ENCODE measurements at regions of chr1 and their contacts with region 1.

Region 1: GRCh38 chr1:170967042-170967910 is 31.9 kb downstream of the MROH9 start:
- DNase-seq: peak in 3 of 7 donors; percentile 12 to 23 (median 18)
- H3K4me3 ChIP-seq: no peak overlapping the region
- H3K27ac ChIP-seq: no peak overlapping the region
- H3K4me1 ChIP-seq: no peaks in the 10 kb centered on the region
- H3K27me3 ChIP-seq: no peaks in the 10 kb centered on the region
- CTCF ChIP-seq: peak; percentile 56 to 73 (median 68)
- POLR2A ChIP-seq: no peak

Region 2: DNA sequence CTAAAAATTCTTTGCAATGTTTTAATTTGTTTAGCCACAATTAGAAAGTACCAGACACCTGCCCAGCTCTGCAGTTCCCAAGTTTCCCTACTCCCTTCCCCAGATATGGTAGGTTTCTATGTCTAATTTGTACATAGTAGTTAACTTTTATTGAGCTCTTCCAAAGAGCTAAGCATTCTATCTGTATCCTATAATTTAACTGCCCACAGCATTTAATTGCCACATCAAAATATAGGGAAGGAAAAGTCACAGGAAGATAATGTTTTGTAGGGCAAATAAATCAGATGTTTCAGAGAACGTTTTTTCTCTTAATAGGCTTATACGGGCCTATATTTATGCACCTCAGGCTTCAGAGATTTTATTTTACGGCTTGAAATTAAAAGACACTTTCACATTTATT is 107.8 kb after region 1 on chr1:
- intact Hi-C with region 1: no loop called
- DNase-seq: no peak
- H3K4me3 ChIP-seq: no peak overlapping the region
- H3K27ac ChIP-seq: no peak overlapping the region
- H3K4me1 ChIP-seq: no peaks in the 10 kb centered on the region
- H3K27me3 ChIP-seq: no peaks in the 10 kb centered on the region
- CTCF ChIP-seq: no peak
- POLR2A ChIP-seq: no peak

Region 3: DNA sequence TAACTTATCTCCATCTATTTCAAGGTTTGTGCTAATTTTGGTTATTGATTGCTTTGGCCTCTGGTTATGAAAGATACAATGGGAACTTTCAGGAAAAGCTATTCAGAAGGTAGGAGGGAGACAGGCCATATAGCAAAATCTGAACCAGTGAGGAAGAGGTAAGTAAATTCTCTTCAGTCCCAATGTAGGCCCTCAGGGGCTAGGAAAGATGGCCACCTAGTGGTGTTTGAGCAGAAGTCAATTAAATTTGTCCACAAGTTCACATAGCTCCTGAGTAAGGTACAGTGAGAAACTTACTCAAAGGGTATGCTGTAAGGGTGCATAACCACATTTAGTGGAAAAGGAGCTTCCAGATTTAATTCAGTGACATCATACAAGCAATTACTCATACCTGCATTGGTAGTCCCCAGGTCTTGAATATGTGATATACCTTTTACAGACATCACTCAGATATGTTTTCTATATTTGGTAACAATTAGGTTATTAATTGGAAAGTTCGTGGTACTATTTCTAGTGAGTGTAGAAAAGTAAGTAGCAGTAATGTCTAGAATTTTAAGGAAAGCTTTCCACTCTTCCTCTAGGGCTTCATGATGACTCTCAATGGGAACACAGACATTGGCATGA is 259.6 kb after region 1 on chr1:
- intact Hi-C with region 1: loop called in 1 of 2 experiments (anchors 5 kb)
- DNase-seq: peak in 6 of 7 donors; percentile 31 to 52 (median 38)
- H3K4me3 ChIP-seq: no peak overlapping the region
- H3K27ac ChIP-seq: no peak overlapping the region
- H3K4me1 ChIP-seq: peaks cover 0 to 3% of the 10 kb centered on the region in 2 donors
- H3K27me3 ChIP-seq: no peaks in the 10 kb centered on the region
- CTCF ChIP-seq: peak; percentile 58 to 82 (median 77)
- POLR2A ChIP-seq: no peak

Region 4: DNA sequence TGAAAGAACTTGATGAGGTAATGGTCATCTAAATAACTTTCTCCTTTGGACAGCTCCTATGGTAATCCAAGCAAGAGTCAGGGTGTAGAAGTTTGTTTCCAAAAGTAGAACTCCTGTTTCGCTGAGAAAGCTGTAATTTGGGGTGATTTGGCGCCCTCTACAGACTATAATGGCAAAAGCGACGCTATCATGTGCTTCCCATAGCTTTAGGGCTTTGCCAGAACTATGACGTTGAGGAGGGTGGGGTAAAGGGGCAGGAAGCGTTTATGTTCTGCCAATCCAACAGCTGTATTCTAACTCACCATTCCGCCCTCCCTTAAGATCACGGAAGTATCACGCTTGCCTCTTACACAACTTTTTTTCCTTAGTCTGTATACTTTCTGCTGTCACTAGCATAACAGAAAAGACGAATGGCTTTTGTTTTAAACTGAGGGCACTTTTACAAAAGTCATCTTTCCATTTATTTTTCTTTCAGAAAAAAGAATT is 346.6 kb after region 1 on chr1 and contains the start of gene FMO4:
- intact Hi-C with region 1: loop called in 1 of 2 experiments (anchors 10 kb)
- DNase-seq: peak; percentile 91 to 99 (median 96)
- H3K4me3 ChIP-seq: peak within 1 kb of the TSS in 2 of 4 donors; percentile 2 to 60
- H3K27ac ChIP-seq: peak within 1 kb of the TSS in 3 of 5 donors; percentile 49 to 66 (median 61)
- H3K4me1 ChIP-seq: peaks cover 6 to 12% of the 10 kb centered on the region in 2 donors
- H3K27me3 ChIP-seq: no peaks in the 10 kb centered on the region
- CTCF ChIP-seq: peak; percentile 72 to 97 (median 90)
- POLR2A ChIP-seq: peak in 1 of 2 donors; percentile 52
- total RNA-seq, gene FMO4: 1.7 to 11.4 (median 3.8) TPM

Region 5: DNA sequence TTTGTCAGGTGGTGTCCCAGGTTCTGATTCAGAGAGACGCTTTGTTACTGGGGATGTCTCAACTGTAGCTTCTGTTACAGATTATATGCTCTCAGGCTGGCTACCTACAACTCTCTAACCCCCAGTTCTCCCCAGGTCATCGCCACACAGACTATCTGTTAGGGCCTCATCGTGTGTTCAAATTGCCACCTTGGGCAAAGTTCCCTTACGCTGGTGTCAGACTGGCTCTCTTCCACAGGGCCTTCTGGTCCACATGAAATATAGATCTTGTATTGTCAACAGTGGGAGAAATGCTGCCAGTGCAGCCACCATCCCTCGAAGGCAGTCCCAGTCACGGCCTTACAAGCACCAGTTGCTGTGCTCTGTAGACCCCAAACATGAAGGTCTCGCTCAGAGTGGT is 362.0 kb after region 1 on chr1:
- intact Hi-C with region 1: no loop called
- DNase-seq: no peak
- H3K4me3 ChIP-seq: no peak overlapping the region
- H3K27ac ChIP-seq: no peak overlapping the region
- H3K4me1 ChIP-seq: no peaks in the 10 kb centered on the region
- H3K27me3 ChIP-seq: no peaks in the 10 kb centered on the region
- CTCF ChIP-seq: no peak
- POLR2A ChIP-seq: no peak

Measured in adrenal gland (tissue), 19 donors.